Right cardiac atrium (tissue), 5 donors: ENCODE measurements at regions of chr2 and their contacts with region 1.

Region 1: GRCh38 chr2:61658841-61659780 is 121.0 kb upstream of the XPO1 start:
- DNase-seq: no peak
- ATAC-seq: peak; percentile 89 to 92
- H3K4me3 ChIP-seq: no peak overlapping the region
- H3K27ac ChIP-seq: peak overlapping the region; percentile 42
- H3K4me1 ChIP-seq: peaks cover 7% of the 10 kb centered on the region
- H3K27me3 ChIP-seq: no peaks in the 10 kb centered on the region

Region 2: GRCh38 chr2:61288070-61288841 is 370.9 kb before region 1 on chr2:
- intact Hi-C with region 1: no loop called
- DNase-seq: no peak
- ATAC-seq: no peak
- H3K4me3 ChIP-seq: no peak overlapping the region
- H3K27ac ChIP-seq: no peak overlapping the region
- H3K4me1 ChIP-seq: no peaks in the 10 kb centered on the region
- H3K27me3 ChIP-seq: no peaks in the 10 kb centered on the region

Region 3: GRCh38 chr2:61550375-61551209 is 108.5 kb before region 1 on chr2:
- intact Hi-C with region 1: loop called in 1 of 4 experiments (anchors 10 kb)
- DNase-seq: no peak
- ATAC-seq: no peak
- H3K4me3 ChIP-seq: no peak overlapping the region
- H3K27ac ChIP-seq: no peak overlapping the region
- H3K4me1 ChIP-seq: no peaks in the 10 kb centered on the region
- H3K27me3 ChIP-seq: no peaks in the 10 kb centered on the region

Region 4: GRCh38 chr2:61694312-61695274 is 35.5 kb after region 1 on chr2:
- intact Hi-C with region 1: no loop called
- DNase-seq: peak; percentile 96 to 99 (median 98)
- ATAC-seq: peak; percentile 100
- H3K4me3 ChIP-seq: peak overlapping the region; percentile 90
- H3K27ac ChIP-seq: peak overlapping the region; percentile 90
- H3K4me1 ChIP-seq: no peaks in the 10 kb centered on the region
- H3K27me3 ChIP-seq: no peaks in the 10 kb centered on the region

Region 5: DNA sequence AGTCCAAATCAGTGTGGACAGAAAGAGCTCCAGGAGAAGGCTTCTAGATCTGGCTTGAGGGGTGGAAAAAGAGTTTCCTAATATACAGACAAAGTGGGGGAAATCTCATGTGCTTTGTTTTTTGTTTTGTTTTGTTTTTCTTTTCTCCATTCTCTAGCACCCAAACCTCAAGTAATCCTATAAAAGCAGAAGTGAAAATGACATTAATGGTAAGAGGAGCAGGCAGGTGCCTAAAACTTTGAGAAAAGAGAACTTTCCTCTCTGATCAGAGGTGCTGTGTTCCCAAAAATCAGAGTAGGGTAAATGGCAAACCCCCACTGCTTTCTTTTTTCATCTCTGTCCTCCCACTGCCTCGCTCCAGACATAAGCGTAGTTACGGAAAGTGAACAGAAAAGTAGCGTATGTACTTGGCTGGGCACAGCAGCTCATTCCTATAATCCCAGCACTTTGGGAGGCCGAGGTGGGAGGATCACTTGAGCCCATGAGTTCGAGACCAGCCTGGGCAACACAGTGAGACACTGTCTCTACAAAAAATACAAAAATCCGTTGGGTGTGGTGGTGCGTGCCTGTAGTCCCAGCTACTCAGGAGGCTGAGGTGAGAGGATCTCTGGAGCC is 117.0 kb after region 1 on chr2:
- intact Hi-C with region 1: no loop called
- DNase-seq: no peak
- ATAC-seq: no peak
- H3K4me3 ChIP-seq: no peak overlapping the region
- H3K27ac ChIP-seq: no peak overlapping the region
- H3K4me1 ChIP-seq: no peaks in the 10 kb centered on the region
- H3K27me3 ChIP-seq: no peaks in the 10 kb centered on the region

Region 6: GRCh38 chr2:62038975-62039771 is 380.1 kb after region 1 on chr2:
- intact Hi-C with region 1: no loop called
- DNase-seq: no peak
- ATAC-seq: peak in 1 of 2 donors; percentile 36
- H3K4me3 ChIP-seq: no peak overlapping the region
- H3K27ac ChIP-seq: no peak overlapping the region
- H3K4me1 ChIP-seq: no peaks in the 10 kb centered on the region
- H3K27me3 ChIP-seq: no peaks in the 10 kb centered on the region